Naive thymus-derived CD4-positive, alpha-beta T cell (primary cell): ENCODE measurements at regions of chr18 and their contacts with region 1.

Region 1: DNA sequence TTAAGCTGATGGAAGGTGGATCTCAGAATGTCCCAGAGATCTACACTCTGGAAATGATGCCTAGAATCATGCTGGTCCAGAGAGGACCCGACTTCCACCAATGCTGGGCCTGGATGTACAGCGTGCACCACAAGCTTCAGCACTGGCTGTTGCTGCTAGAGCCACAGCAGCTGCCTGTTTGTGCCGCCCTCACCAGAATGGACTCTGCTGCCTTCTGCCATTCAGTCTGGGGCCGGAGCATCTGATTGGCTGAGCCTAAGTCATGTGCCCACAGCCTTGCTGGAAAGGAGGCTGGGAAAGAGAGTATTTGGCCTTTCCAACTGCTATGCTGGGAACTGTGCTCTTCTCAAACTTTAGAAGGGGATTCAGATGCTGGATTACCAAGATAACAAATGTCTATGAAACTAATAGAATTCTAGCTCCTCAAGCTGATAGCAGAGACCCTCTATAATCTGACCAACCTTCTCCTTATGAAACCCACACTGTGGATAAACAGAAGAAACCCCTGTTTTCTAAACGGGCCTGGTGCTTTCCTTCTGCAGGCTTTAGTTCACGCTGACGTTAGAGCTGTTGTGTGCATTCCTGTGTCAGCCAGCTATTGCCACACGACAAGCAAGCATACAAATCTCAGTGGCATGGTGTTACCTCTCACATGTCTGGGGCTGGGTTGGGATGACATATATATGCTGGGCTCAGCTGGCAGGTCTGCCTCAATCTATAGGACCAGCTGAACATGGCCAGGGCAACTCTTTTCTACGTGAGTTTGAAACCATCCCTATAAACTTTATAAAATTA is 4.1 kb upstream of the LOXHD1 start:
- DNase-seq: no peak
- ATAC-seq: no peak
- H3K4me3 ChIP-seq: no peak overlapping the region
- H3K4me3 Mint-ChIP-seq: no peak overlapping the region
- H3K27ac ChIP-seq: no peak overlapping the region
- H3K27ac Mint-ChIP-seq: no peak overlapping the region
- H3K4me1 ChIP-seq: no peaks in the 10 kb centered on the region
- H3K4me1 Mint-ChIP-seq: no peaks in the 10 kb centered on the region
- H3K27me3 ChIP-seq: no peaks in the 10 kb centered on the region
- H3K27me3 Mint-ChIP-seq: peaks cover 0 to 10% (median 0%) of the 10 kb centered on the region in 5 donors

Region 2: GRCh38 chr18:46148810-46149209 is 512.3 kb before region 1 on chr18:
- CTCF ChIA-PET with region 1: interaction called, 41 read pairs
- POLR2A ChIA-PET with region 1: no interaction called
- intact Hi-C with region 1: loop called (anchors 1 kb)
- DNase-seq: peak; percentile 14 to 65 (median 51)
- ATAC-seq: peak; percentile 70
- H3K4me3 ChIP-seq: no peak overlapping the region
- H3K4me3 Mint-ChIP-seq: peak overlapping the region in 6 of 10 donors; percentile 5 to 39 (median 28)
- H3K27ac ChIP-seq: no peak overlapping the region
- H3K27ac Mint-ChIP-seq: peak overlapping the region; percentile 9 to 87 (median 75)
- H3K4me1 ChIP-seq: peaks cover 21 to 43% of the 10 kb centered on the region in 2 donors
- H3K4me1 Mint-ChIP-seq: peaks cover 9 to 48% (median 45%) of the 10 kb centered on the region in 7 donors
- H3K27me3 ChIP-seq: no peaks in the 10 kb centered on the region
- H3K27me3 Mint-ChIP-seq: peaks cover 0 to 3% (median 0%) of the 10 kb centered on the region in 5 donors

Region 3: GRCh38 chr18:46213295-46213694 is 447.9 kb before region 1 on chr18:
- CTCF ChIA-PET with region 1: interaction called, 3 read pairs
- POLR2A ChIA-PET with region 1: no interaction called
- intact Hi-C with region 1: loop called in 1 of 2 experiments (anchors 2 kb)
- DNase-seq: peak in 7 of 9 donors; percentile 20 to 47 (median 31)
- ATAC-seq: peak; percentile 69
- H3K4me3 ChIP-seq: no peak overlapping the region
- H3K4me3 Mint-ChIP-seq: peak overlapping the region in 9 of 10 donors; percentile 4 to 72 (median 43)
- H3K27ac ChIP-seq: no peak overlapping the region
- H3K27ac Mint-ChIP-seq: peak overlapping the region in 4 of 9 donors; percentile 27 to 62 (median 56)
- H3K4me1 ChIP-seq: peaks cover 21% of the 10 kb centered on the region in 2 donors
- H3K4me1 Mint-ChIP-seq: peaks cover 40 to 96% (median 84%) of the 10 kb centered on the region in 7 donors
- H3K27me3 ChIP-seq: no peaks in the 10 kb centered on the region
- H3K27me3 Mint-ChIP-seq: no peaks in the 10 kb centered on the region

Region 4: GRCh38 chr18:46281185-46282176 is 379.7 kb before region 1 on chr18:
- CTCF ChIA-PET with region 1: interaction called, 35 read pairs
- POLR2A ChIA-PET with region 1: no interaction called
- intact Hi-C with region 1: loop called (anchors 1 kb)
- DNase-seq: peak in 8 of 9 donors; percentile 7 to 60 (median 40)
- ATAC-seq: peak; percentile 85
- H3K4me3 ChIP-seq: no peak overlapping the region
- H3K4me3 Mint-ChIP-seq: no peak overlapping the region
- H3K27ac ChIP-seq: no peak overlapping the region
- H3K27ac Mint-ChIP-seq: no peak overlapping the region
- H3K4me1 ChIP-seq: no peaks in the 10 kb centered on the region
- H3K4me1 Mint-ChIP-seq: peaks cover 6 to 16% (median 14%) of the 10 kb centered on the region in 7 donors
- H3K27me3 ChIP-seq: no peaks in the 10 kb centered on the region
- H3K27me3 Mint-ChIP-seq: no peaks in the 10 kb centered on the region

Region 5: DNA sequence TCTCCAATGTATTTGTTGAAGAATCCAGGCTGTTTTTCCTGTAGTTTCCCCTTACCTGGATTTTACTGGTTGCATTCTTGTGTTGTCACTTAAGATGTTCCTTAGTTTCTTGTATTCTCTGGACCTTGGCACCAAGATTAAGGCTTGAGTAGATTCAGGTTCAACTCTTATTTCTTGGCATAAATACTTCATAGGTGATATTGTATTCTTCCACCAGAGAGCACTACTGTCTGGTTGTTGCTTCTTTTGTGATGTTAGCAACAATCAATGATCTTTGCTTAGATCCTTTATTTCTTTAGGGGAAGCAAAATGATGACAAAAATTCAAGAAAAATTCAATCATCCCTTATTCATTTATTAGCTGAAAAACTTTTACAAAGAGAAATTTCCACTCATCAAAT is 215.2 kb before region 1 on chr18:
- CTCF ChIA-PET with region 1: no interaction called
- POLR2A ChIA-PET with region 1: no interaction called
- intact Hi-C with region 1: no loop called
- DNase-seq: no peak
- ATAC-seq: no peak
- H3K4me3 ChIP-seq: no peak overlapping the region
- H3K4me3 Mint-ChIP-seq: no peak overlapping the region
- H3K27ac ChIP-seq: no peak overlapping the region
- H3K27ac Mint-ChIP-seq: no peak overlapping the region
- H3K4me1 ChIP-seq: no peaks in the 10 kb centered on the region
- H3K4me1 Mint-ChIP-seq: peaks cover 0 to 4% (median 0%) of the 10 kb centered on the region in 7 donors
- H3K27me3 ChIP-seq: peaks cover 0 to 3% of the 10 kb centered on the region in 2 donors
- H3K27me3 Mint-ChIP-seq: peaks cover 7 to 43% (median 19%) of the 10 kb centered on the region in 5 donors

Region 6: GRCh38 chr18:46481048-46481846 is 179.9 kb before region 1 on chr18:
- CTCF ChIA-PET with region 1: interaction called, 5 read pairs
- POLR2A ChIA-PET with region 1: no interaction called
- intact Hi-C with region 1: loop called in 1 of 2 experiments (anchors 1 kb)
- DNase-seq: peak in 6 of 9 donors; percentile 31 to 60 (median 40)
- ATAC-seq: peak; percentile 67
- H3K4me3 ChIP-seq: no peak overlapping the region
- H3K4me3 Mint-ChIP-seq: no peak overlapping the region
- H3K27ac ChIP-seq: no peak overlapping the region
- H3K27ac Mint-ChIP-seq: no peak overlapping the region
- H3K4me1 ChIP-seq: no peaks in the 10 kb centered on the region
- H3K4me1 Mint-ChIP-seq: no peaks in the 10 kb centered on the region
- H3K27me3 ChIP-seq: no peaks in the 10 kb centered on the region
- H3K27me3 Mint-ChIP-seq: peaks cover 0 to 22% (median 10%) of the 10 kb centered on the region in 5 donors

Region 7: DNA sequence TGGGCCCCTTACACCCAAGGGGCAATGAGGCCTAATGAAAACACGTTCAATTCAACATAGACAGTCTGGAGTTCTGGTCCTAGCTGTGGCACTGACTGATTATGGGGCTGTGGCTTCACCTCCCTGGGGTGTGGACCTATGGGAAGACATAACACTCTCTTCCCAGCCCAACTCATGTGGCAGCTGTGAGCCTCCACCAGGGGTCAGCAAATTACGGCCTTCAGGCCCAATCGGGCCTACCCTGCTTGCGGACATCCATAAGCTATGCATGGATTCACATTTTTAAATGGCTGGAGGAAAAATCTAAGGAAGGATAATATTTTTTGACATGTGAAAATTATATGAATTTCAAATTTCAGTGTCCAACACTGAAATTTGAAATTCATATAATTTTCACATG is 105.4 kb before region 1 on chr18:
- CTCF ChIA-PET with region 1: interaction called, 3 read pairs
- POLR2A ChIA-PET with region 1: no interaction called
- intact Hi-C with region 1: loop called in 1 of 2 experiments (anchors 1 kb)
- DNase-seq: no peak
- ATAC-seq: peak; percentile 42
- H3K4me3 ChIP-seq: no peak overlapping the region
- H3K4me3 Mint-ChIP-seq: no peak overlapping the region
- H3K27ac ChIP-seq: no peak overlapping the region
- H3K27ac Mint-ChIP-seq: no peak overlapping the region
- H3K4me1 ChIP-seq: no peaks in the 10 kb centered on the region
- H3K4me1 Mint-ChIP-seq: peaks cover 0 to 4% (median 0%) of the 10 kb centered on the region in 7 donors
- H3K27me3 ChIP-seq: no peaks in the 10 kb centered on the region
- H3K27me3 Mint-ChIP-seq: no peaks in the 10 kb centered on the region